Panc1 (cell line): ENCODE measurements at regions of chr17 and their contacts with region 1.

Region 1: DNA sequence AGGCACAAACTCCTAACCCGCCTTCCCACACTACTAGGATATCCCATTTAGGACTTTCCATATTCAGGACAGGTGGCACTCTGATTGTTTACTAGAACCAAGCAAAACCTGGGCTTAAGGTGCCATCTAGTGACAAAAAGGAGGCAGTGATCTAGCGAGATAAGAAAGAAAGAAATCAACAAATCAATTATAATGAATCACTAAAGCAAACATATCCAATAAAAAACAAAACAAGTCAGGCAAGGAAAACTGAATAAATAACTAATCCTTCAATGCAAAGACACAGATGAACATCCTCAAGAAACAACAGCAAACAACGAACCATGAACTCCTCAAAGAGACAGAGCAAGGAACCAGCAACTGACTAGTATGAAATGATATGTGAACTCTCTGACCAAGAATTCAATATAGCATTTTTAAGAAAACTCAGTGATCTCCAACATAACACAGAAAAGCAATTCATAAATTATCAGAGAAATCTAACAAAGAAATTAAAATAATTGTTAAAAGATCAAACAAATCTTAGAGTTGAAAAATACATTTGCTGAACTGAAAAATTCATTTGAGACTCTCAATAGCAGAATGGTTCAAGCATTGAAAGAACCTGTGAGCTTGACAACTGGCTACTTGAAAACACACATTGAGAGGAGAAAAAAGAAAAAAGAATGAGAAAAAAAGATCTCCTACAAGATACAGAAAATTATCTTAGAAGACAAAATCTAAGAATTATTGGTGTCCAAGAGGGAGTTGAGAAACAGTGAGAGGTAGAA is 203.7 kb downstream of the CEP112 start:
- DNase-seq: peak; percentile 25
- ATAC-seq: no peak; the same call in 1 of the 2 replicates
- H3K4me3 ChIP-seq: no peak overlapping the region
- H3K27ac ChIP-seq: no peak overlapping the region
- H3K4me1 ChIP-seq: no peaks in the 10 kb centered on the region
- H3K27me3 ChIP-seq: no peaks in the 10 kb centered on the region
- CTCF ChIP-seq: peak; percentile 54; the same call in 1 of the 2 replicates

Region 2: GRCh38 chr17:65219124-65219523 is 769.1 kb before region 1 on chr17:
- CTCF ChIA-PET with region 1: no interaction called
- POLR2A ChIA-PET with region 1: no interaction called
- in situ Hi-C with region 1: no loop called
- intact Hi-C with region 1: no loop called
- DNase-seq: no peak
- ATAC-seq: no peak
- H3K4me3 ChIP-seq: no peak overlapping the region
- H3K27ac ChIP-seq: no peak overlapping the region
- H3K4me1 ChIP-seq: no peaks in the 10 kb centered on the region
- H3K27me3 ChIP-seq: peaks cover 11% of the 10 kb centered on the region
- CTCF ChIP-seq: no peak

Region 3: GRCh38 chr17:65231662-65232335 is 756.5 kb before region 1 on chr17:
- CTCF ChIA-PET with region 1: no interaction called
- POLR2A ChIA-PET with region 1: no interaction called
- in situ Hi-C with region 1: no loop called
- intact Hi-C with region 1: loop called (anchors 10 kb)
- DNase-seq: peak; percentile 27
- ATAC-seq: peak; percentile 95
- H3K4me3 ChIP-seq: no peak overlapping the region
- H3K27ac ChIP-seq: no peak overlapping the region
- H3K4me1 ChIP-seq: no peaks in the 10 kb centered on the region
- H3K27me3 ChIP-seq: no peaks in the 10 kb centered on the region; the same call in 1 of the 2 replicates
- CTCF ChIP-seq: peak; percentile 73

Region 4: GRCh38 chr17:65294179-65294720 is 694.0 kb before region 1 on chr17:
- CTCF ChIA-PET with region 1: no interaction called
- POLR2A ChIA-PET with region 1: no interaction called
- in situ Hi-C with region 1: no loop called
- intact Hi-C with region 1: loop called (anchors 10 kb)
- DNase-seq: peak; percentile 18
- ATAC-seq: peak; percentile 93
- H3K4me3 ChIP-seq: no peak overlapping the region
- H3K27ac ChIP-seq: no peak overlapping the region
- H3K4me1 ChIP-seq: no peaks in the 10 kb centered on the region
- H3K27me3 ChIP-seq: no peaks in the 10 kb centered on the region
- CTCF ChIP-seq: peak; percentile 82

Region 5: DNA sequence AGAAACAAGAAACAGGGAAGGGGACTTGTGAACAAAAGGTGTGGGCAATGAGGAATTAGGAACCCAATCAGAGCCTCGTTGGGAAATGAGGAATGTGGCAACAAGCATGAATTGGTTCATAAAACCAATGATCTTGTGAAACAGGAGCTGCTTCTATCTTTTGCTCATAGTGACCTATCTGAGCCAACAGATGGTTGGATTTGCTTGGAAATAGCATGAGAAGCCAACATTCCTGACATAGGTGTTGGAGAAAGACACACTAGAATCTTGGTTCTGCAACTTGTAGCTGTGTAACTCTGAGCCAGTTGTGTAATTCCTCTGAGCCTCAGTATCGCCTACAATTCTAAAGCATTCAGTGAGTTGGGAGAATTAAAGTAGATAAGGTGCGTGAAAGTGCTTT is 175.0 kb before region 1 on chr17:
- CTCF ChIA-PET with region 1: no interaction called
- POLR2A ChIA-PET with region 1: no interaction called
- in situ Hi-C with region 1: no loop called
- intact Hi-C with region 1: no loop called
- DNase-seq: no peak
- ATAC-seq: no peak
- H3K4me3 ChIP-seq: no peak overlapping the region
- H3K27ac ChIP-seq: no peak overlapping the region
- H3K4me1 ChIP-seq: no peaks in the 10 kb centered on the region
- H3K27me3 ChIP-seq: no peaks in the 10 kb centered on the region
- CTCF ChIP-seq: no peak

Region 6: GRCh38 chr17:65931246-65932149 is 56.8 kb before region 1 on chr17:
- CTCF ChIA-PET with region 1: no interaction called
- POLR2A ChIA-PET with region 1: no interaction called
- in situ Hi-C with region 1: no loop called
- intact Hi-C with region 1: no loop called
- DNase-seq: no peak
- ATAC-seq: no peak
- H3K4me3 ChIP-seq: no peak overlapping the region
- H3K27ac ChIP-seq: no peak overlapping the region
- H3K4me1 ChIP-seq: no peaks in the 10 kb centered on the region
- H3K27me3 ChIP-seq: no peaks in the 10 kb centered on the region
- CTCF ChIP-seq: no peak

Region 7: DNA sequence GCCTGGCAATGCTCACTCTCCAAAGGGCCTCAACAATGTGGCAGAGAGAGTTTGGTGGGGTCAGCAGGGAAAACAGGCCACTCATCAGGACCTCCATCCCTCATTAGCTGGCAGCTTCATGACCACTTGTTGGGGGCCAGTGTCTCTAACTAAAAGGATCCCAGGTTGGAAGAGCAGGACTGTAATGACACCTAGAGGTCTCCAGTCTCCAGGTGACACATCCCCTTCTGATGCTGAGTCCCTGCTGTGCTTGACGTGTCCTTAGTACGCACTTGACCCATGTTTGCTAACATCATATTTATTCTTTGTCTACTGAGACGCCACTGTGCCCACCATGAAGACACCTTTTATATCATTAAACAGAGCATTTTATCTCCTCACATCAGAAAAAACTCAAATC is 880.2 kb after region 1 on chr17:
- CTCF ChIA-PET with region 1: interaction called, 10 read pairs
- POLR2A ChIA-PET with region 1: no interaction called
- in situ Hi-C with region 1: no loop called
- intact Hi-C with region 1: no loop called
- DNase-seq: no peak
- ATAC-seq: no peak
- H3K4me3 ChIP-seq: no peak overlapping the region
- H3K27ac ChIP-seq: no peak overlapping the region
- H3K4me1 ChIP-seq: no peaks in the 10 kb centered on the region
- H3K27me3 ChIP-seq: no peaks in the 10 kb centered on the region; the same call in 1 of the 2 replicates
- CTCF ChIP-seq: no peak